Ovary (tissue), 10 donors: ENCODE measurements at regions of chr1 and their contacts with region 1.

Region 1: DNA sequence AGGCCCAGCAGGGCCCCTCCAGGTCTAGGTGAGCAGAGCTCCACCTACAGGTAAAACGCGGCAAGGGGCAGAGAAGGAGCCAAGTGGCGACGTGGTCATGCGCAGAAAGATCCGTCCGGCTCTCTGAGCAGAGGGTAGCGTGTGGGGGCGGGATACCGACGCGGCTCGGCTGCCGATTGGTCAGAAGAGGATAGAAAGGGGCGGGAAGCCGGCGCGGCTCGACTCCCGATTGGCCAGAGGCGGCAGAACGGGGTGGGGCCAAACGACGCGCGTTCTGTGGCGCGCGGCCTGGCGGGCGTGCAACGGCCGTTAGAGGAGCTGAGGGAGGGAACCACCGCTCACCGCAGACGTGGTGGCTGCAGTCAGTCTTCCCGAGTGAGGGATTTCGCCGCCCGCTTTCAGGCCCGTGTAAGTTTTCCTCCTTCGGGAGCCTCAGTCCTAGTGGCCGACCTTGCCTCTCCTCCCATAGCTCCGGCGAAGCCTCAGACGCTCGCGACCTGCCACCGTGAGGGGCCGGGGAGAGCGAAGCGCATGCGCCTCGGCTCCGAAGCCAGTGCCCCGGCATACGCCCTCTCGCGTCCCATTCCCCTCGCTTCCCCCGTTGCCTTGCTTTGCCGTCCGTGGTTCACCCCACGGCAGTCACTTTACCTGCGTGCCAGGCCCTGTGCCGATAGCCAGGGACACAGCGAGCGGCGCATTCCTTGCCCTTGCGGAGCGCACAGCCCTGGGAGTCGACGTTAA is at the start of gene CEP85:
- DNase-seq: peak; percentile 97 to 99 (median 98)
- H3K4me3 ChIP-seq: peak within 1 kb of the TSS; percentile 77
- H3K27ac ChIP-seq: peak within 1 kb of the TSS; percentile 52 to 57
- H3K4me1 ChIP-seq: peaks cover 2% of the 10 kb centered on the region
- H3K27me3 ChIP-seq: no peaks in the 10 kb centered on the region
- CTCF ChIP-seq: peak; percentile 85 to 90 (median 89)
- EP300 ChIP-seq: no peak
- POLR2A ChIP-seq: peak; percentile 29
- total RNA-seq, gene CEP85: 2.3 to 8.4 (median 4.0) TPM

Region 2: GRCh38 chr1:26111530-26112406 is 122.3 kb before region 1 on chr1 and contains the start of gene PDIK1L:
- intact Hi-C with region 1: loop called in 1 of 4 experiments (anchors 5 kb)
- DNase-seq: peak; percentile 92 to 97 (median 95)
- H3K4me3 ChIP-seq: peak within 1 kb of the TSS; percentile 91
- H3K27ac ChIP-seq: peak within 1 kb of the TSS; percentile 50 to 95
- H3K4me1 ChIP-seq: peaks cover 2% of the 10 kb centered on the region
- H3K27me3 ChIP-seq: no peaks in the 10 kb centered on the region
- CTCF ChIP-seq: no peak
- EP300 ChIP-seq: no peak
- POLR2A ChIP-seq: no peak
- total RNA-seq, gene PDIK1L: 5.7 to 16.5 (median 12.3) TPM

Region 3: DNA sequence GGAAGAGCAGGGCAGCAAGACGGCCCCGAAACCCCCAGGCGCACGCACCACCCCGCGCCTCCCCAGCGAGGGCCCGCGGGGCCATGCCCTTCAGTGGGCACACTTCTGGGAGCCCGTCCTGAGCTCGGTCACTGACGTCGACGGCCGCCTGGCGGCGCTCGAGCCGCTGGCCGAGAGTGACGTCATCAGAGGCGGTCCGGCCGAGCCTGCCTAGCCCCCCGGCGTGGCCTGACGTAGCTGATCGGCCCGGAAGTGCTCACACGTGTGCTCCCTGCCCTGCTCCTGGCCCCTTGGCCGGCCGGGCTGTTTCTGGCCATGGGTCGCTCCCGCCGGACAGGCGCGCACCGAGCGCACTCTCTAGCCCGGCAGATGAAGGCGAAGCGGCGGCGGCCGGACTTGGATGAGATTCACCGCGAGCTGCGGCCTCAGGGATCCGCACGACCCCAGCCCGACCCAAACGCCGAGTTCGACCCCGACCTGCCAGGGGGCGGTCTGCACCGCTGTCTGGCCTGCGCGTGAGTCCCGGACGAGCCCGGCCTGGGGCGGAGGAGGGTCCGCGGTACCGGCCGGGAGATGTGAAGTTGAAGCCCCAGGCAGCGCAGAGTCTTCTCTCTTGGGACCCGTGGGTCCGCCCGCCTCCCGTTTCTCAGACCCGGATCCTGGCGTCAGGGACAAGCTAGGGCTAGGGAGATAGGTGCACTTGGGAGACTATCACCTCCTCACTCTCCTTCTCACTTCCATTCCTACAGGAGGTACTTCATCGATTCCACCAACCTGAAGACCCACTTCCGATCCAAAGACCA is 64.2 kb before region 1 on chr1 and contains the start of gene ZNF593:
- intact Hi-C with region 1: loop called in 1 of 4 experiments (anchors 5 kb)
- DNase-seq: peak; percentile 93 to 96 (median 95)
- H3K4me3 ChIP-seq: peak within 1 kb of the TSS; percentile 91
- H3K27ac ChIP-seq: peak within 1 kb of the TSS; percentile 43 to 76
- H3K4me1 ChIP-seq: peaks cover 6% of the 10 kb centered on the region
- H3K27me3 ChIP-seq: no peaks in the 10 kb centered on the region
- CTCF ChIP-seq: peak; percentile 88 to 99 (median 98)
- EP300 ChIP-seq: peak; percentile 57
- POLR2A ChIP-seq: peak; percentile 78
- total RNA-seq, gene ZNF593: 17.8 to 62.5 (median 40.1) TPM

Region 4: DNA sequence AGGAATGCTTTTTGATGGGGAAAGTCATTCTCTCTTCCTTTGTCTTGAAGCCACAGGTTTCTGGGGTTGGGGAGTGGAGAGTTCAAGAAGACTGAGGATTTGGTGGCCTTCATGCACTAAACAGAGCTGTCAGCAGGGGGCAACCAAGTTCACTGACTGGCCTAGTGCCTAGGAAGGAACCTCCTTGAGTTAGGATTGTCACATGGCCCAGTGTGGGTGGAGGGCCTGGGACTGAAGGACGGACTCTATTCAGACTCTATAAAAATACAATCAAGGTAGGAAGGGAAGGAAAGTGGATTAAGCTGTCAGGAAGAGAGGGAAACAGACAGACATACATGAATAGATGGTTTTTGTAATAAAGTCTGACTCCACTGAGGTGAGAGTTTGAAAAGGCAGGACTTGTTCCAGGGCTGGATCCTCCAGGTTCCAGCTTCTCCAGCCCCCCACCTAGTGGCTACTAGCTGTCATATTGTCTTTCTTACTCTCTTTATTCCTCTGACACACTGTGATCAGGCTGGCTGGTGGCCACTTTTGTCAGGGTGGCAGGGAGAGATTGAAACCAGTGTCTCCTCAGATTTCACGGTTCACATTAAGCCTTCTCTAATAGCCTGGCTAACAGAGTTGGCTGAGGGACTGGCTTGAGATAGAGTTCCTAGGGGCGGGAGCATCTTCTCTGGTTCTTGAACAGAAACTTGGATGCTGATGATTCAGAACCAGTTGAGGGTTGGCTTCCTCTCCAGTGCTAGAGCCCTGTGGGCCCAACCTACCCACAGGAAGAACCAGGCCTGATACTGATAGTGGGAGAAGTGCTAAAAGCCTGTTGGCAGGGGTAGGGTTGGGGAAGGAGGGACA is 41.7 kb after region 1 on chr1:
- intact Hi-C with region 1: no loop called
- DNase-seq: peak; percentile 71 to 85 (median 78)
- H3K4me3 ChIP-seq: no peak overlapping the region
- H3K27ac ChIP-seq: peak overlapping the region in 1 of 2 donors; percentile 47
- H3K4me1 ChIP-seq: peaks cover 6% of the 10 kb centered on the region
- H3K27me3 ChIP-seq: no peaks in the 10 kb centered on the region
- CTCF ChIP-seq: peak; percentile 52 to 72 (median 70)
- EP300 ChIP-seq: no peak
- POLR2A ChIP-seq: no peak